CD8-positive, alpha-beta memory T cell (primary cell): ENCODE measurements at regions of chr9 and their contacts with region 1.

Region 1: GRCh38 chr9:127869310-127870152 is 7.9 kb downstream of the AK1 start:
- DNase-seq: peak; percentile 58 to 85 (median 71)
- H3K4me3 ChIP-seq: no peak overlapping the region
- H3K4me3 Mint-ChIP-seq: peak overlapping the region in 1 of 7 donors; percentile 9
- H3K27ac ChIP-seq: no peak overlapping the region
- H3K27ac Mint-ChIP-seq: peak overlapping the region in 4 of 8 donors; percentile 42 to 88 (median 61)
- H3K4me1 ChIP-seq: peaks cover 16% of the 10 kb centered on the region
- H3K4me1 Mint-ChIP-seq: peaks cover 16 to 18% (median 18%) of the 10 kb centered on the region in 3 donors
- H3K27me3 ChIP-seq: no peaks in the 10 kb centered on the region
- H3K27me3 Mint-ChIP-seq: no peaks in the 10 kb centered on the region

Region 2: DNA sequence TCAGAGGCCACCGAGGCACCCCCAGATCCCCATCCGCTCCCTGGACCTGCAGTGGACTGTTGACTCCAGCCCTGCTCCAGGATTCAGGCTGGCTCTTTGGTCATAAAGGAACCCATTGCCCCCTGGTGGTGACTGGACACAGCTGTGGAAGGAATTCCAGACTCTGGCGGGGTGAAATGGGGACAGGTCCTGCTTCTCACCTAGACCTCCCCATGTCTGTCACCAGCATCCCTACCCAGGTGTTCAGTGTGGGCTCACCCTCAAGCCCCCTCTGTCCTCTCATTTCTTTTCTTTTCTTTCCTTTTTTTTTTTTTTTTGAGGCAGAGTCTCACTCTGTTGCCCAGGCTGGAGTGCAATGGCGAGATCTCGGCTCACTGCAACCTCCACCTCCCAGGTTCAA is 283.0 kb before region 1 on chr9:
- CTCF ChIA-PET with region 1: interaction called, 10 read pairs
- POLR2A ChIA-PET with region 1: no interaction called
- DNase-seq: peak; percentile 32 to 76 (median 50)
- H3K4me3 ChIP-seq: no peak overlapping the region
- H3K4me3 Mint-ChIP-seq: no peak overlapping the region
- H3K27ac ChIP-seq: no peak overlapping the region
- H3K27ac Mint-ChIP-seq: no peak overlapping the region
- H3K4me1 ChIP-seq: no peaks in the 10 kb centered on the region
- H3K4me1 Mint-ChIP-seq: no peaks in the 10 kb centered on the region
- H3K27me3 ChIP-seq: no peaks in the 10 kb centered on the region
- H3K27me3 Mint-ChIP-seq: peaks cover 3 to 16% of the 10 kb centered on the region in 2 donors

Region 3: DNA sequence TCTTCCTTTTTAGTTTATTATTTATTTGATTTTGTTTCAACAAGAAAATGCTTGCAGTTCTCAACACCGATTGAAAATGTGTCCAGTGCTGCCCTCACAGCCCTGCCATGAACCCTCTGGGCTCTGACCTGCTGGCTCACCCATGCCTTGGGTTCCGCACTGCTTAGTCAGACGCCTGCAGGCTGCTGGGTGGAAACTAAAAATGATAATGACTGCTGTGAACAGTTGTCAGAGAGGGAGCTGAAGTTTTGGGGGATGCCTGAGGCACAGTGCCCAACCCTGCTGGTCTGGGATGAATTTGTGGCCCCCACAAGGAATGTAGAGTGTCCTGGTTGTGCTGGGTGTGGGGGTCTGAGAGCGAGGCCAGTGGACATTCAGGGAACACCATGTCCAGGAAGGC is 185.0 kb before region 1 on chr9:
- CTCF ChIA-PET with region 1: no interaction called
- POLR2A ChIA-PET with region 1: no interaction called
- DNase-seq: no peak
- H3K4me3 ChIP-seq: no peak overlapping the region
- H3K4me3 Mint-ChIP-seq: no peak overlapping the region
- H3K27ac ChIP-seq: no peak overlapping the region
- H3K27ac Mint-ChIP-seq: no peak overlapping the region
- H3K4me1 ChIP-seq: no peaks in the 10 kb centered on the region
- H3K4me1 Mint-ChIP-seq: no peaks in the 10 kb centered on the region
- H3K27me3 ChIP-seq: no peaks in the 10 kb centered on the region
- H3K27me3 Mint-ChIP-seq: peaks cover 0 to 2% of the 10 kb centered on the region in 2 donors

Region 4: GRCh38 chr9:127785023-127785932 is 84.3 kb before region 1 on chr9:
- CTCF ChIA-PET with region 1: interaction called, 25 read pairs
- POLR2A ChIA-PET with region 1: interaction called, 5 read pairs
- DNase-seq: peak; percentile 85 to 94 (median 89)
- H3K4me3 ChIP-seq: peak overlapping the region; percentile 52
- H3K4me3 Mint-ChIP-seq: peak overlapping the region; percentile 85 to 97 (median 90)
- H3K27ac ChIP-seq: peak overlapping the region; percentile 64
- H3K27ac Mint-ChIP-seq: peak overlapping the region; percentile 95 to 99 (median 98)
- H3K4me1 ChIP-seq: peaks cover 59% of the 10 kb centered on the region
- H3K4me1 Mint-ChIP-seq: peaks cover 59 to 76% (median 76%) of the 10 kb centered on the region in 3 donors
- H3K27me3 ChIP-seq: no peaks in the 10 kb centered on the region
- H3K27me3 Mint-ChIP-seq: peaks cover 0 to 4% of the 10 kb centered on the region in 2 donors

Region 5: GRCh38 chr9:127802576-127803443 is 66.7 kb before region 1 on chr9 and contains the start of gene FPGS:
- CTCF ChIA-PET with region 1: interaction called, 16 read pairs
- POLR2A ChIA-PET with region 1: no interaction called
- DNase-seq: peak; percentile 79 to 91 (median 85)
- H3K4me3 ChIP-seq: peak within 1 kb of the TSS; percentile 97
- H3K4me3 Mint-ChIP-seq: peak within 1 kb of the TSS; percentile 91 to 98 (median 93)
- H3K27ac ChIP-seq: peak within 1 kb of the TSS; percentile 90
- H3K27ac Mint-ChIP-seq: peak within 1 kb of the TSS; percentile 81 to 100 (median 94)
- H3K4me1 ChIP-seq: peaks cover 20% of the 10 kb centered on the region
- H3K4me1 Mint-ChIP-seq: peaks cover 20 to 46% (median 28%) of the 10 kb centered on the region in 3 donors
- H3K27me3 ChIP-seq: no peaks in the 10 kb centered on the region
- H3K27me3 Mint-ChIP-seq: peaks cover 0 to 1% of the 10 kb centered on the region in 2 donors
- total RNA-seq, gene FPGS: 110 to 111 TPM

Region 6: GRCh38 chr9:127887792-127888191 is 18.3 kb after region 1 on chr9:
- CTCF ChIA-PET with region 1: interaction called, 18 read pairs
- POLR2A ChIA-PET with region 1: no interaction called
- DNase-seq: no peak
- H3K4me3 ChIP-seq: no peak overlapping the region
- H3K4me3 Mint-ChIP-seq: no peak overlapping the region
- H3K27ac ChIP-seq: no peak overlapping the region
- H3K27ac Mint-ChIP-seq: peak overlapping the region in 2 of 8 donors; percentile 60 to 70
- H3K4me1 ChIP-seq: no peaks in the 10 kb centered on the region
- H3K4me1 Mint-ChIP-seq: peaks cover 9 to 39% (median 12%) of the 10 kb centered on the region in 3 donors
- H3K27me3 ChIP-seq: no peaks in the 10 kb centered on the region
- H3K27me3 Mint-ChIP-seq: peaks cover 0 to 1% of the 10 kb centered on the region in 2 donors

Region 7: GRCh38 chr9:127923771-127924170 is 54.2 kb after region 1 on chr9:
- CTCF ChIA-PET with region 1: interaction called, 29 read pairs
- POLR2A ChIA-PET with region 1: no interaction called
- DNase-seq: no peak
- H3K4me3 ChIP-seq: no peak overlapping the region
- H3K4me3 Mint-ChIP-seq: peak overlapping the region in 1 of 7 donors; percentile 51
- H3K27ac ChIP-seq: no peak overlapping the region
- H3K27ac Mint-ChIP-seq: no peak overlapping the region
- H3K4me1 ChIP-seq: peaks cover 40% of the 10 kb centered on the region
- H3K4me1 Mint-ChIP-seq: peaks cover 9 to 39% (median 21%) of the 10 kb centered on the region in 3 donors
- H3K27me3 ChIP-seq: no peaks in the 10 kb centered on the region
- H3K27me3 Mint-ChIP-seq: peaks cover 0 to 8% of the 10 kb centered on the region in 2 donors